ENCODE measurements at regions of chr4 and their contacts with region 1.

Region 1: GRCh38 chr4:52712172-52712990 is 38.8 kb downstream of the ERVMER34-1 start:
- DNase-seq: peak; percentile 97 to 99
- ATAC-seq: peak; percentile 92 to 95
- H3K4me3 ChIP-seq: peak overlapping the region; percentile 47 to 94 (median 72)
- H3K27ac ChIP-seq: peak overlapping the region; percentile 87 to 97 (median 96)
- H3K4me1 ChIP-seq: peaks cover 18 to 21% of the 10 kb centered on the region in 2 donors
- H3K27me3 ChIP-seq: no peaks in the 10 kb centered on the region
- CTCF ChIP-seq: no peak
- POLR2A ChIP-seq: peak; percentile 93 to 97

Region 2: DNA sequence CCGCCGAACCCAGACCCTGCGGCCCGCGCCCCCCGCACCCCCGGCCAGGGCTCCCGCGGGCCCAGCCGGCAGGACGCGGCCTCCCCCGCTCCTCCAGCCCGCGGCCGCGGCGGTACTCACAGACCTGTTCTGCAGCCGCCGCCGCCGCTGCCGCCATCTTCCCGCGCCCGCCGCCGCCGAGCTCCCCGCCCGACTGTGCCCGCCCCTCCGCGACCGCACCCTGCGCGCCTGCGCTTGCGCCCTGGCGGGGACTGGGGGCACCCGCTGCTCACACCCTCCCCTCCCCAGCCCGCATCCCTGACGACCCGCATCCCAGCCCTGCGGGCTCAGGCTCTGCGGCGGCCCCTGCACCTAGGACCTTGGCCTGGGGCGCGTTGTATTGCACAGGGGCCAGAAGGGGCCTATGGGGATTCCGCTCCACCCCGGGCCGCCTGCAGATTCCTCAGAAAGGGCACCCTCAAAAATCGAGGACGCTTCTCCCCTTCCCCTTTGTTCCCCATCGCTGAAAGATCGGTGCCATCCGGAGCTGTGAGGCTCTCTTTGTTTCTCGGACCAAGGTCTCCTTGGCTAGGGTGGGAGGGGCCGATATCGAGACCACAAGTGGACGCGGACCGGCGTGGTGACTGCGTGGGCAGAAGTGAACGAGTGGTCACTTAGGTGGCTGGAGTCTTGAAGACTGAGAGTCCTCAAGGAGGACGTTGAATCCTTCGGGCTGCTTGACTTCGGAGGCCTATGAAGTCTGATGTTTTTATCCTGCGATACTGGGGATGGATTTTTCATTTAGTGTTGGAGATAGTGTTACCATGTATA is 674.1 kb before region 1 on chr4 and contains the start of gene SGCB:
- in situ Hi-C with region 1: loop called in 1 of 4 experiments (anchors 25 kb)
- intact Hi-C with region 1: no loop called
- DNase-seq: peak; percentile 30 to 46
- ATAC-seq: peak; percentile 86 to 87
- H3K4me3 ChIP-seq: peak within 1 kb of the TSS; percentile 72 to 87 (median 78)
- H3K27ac ChIP-seq: peak within 1 kb of the TSS; percentile 85 to 90 (median 88)
- H3K4me1 ChIP-seq: peaks cover 27 to 39% of the 10 kb centered on the region in 2 donors
- H3K27me3 ChIP-seq: peaks cover 0 to 3% (median 0%) of the 10 kb centered on the region in 3 donors
- CTCF ChIP-seq: peak in 2 of 5 experiments; percentile 13 to 16
- POLR2A ChIP-seq: peak; percentile 63 to 73
- total RNA-seq, gene SGCB: 24.8 to 49.8 (median 39.8) TPM

Region 3: GRCh38 chr4:52477191-52477780 is 235.1 kb before region 1 on chr4:
- in situ Hi-C with region 1: no loop called
- intact Hi-C with region 1: no loop called
- DNase-seq: no peak
- ATAC-seq: no peak
- H3K4me3 ChIP-seq: no peak overlapping the region
- H3K27ac ChIP-seq: no peak overlapping the region
- H3K4me1 ChIP-seq: no peaks in the 10 kb centered on the region
- H3K27me3 ChIP-seq: no peaks in the 10 kb centered on the region
- CTCF ChIP-seq: no peak
- POLR2A ChIP-seq: no peak

Region 4: DNA sequence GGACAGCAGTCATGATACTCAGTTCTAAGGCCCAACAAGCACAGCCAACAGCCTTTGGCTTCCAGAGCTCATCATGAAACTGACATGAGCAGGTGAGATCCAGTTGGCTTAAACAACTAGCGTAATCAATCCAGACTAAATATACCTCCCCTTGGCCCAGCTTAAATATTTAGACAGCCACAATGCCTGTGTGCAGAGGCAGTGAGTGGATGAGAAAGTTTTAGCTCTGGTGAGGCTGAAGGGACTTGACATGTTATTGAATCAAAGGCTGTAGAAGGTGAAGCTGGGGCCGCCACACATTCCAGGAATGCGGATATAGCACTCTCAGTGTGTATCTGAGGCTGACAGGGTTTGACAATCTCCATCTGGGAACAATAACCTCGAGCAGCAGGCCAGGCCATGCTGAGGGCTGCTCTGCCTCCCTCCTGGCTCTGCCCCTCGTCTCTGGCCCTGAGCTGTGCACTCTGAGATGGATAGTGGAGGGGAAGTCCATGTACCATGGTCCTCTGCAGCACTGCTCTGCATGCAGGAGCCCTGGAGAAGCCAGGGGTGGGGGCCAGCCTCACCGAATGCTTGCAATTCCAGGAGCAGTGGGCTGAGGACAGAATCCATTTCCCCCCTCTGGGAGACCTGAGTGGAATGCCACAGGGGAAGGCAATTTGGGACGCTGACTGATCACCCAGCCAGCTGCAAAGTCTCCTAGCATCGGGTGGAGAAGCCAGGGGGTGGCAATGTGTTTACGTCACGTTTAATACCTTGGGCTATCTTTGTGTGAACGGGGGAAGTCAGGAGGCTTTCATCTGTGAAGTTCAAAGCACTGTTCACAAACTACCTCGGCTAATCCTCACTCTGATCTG is 112.5 kb after region 1 on chr4:
- in situ Hi-C with region 1: no loop called
- intact Hi-C with region 1: loop called (anchors 2 kb)
- DNase-seq: peak; percentile 51 to 58
- ATAC-seq: peak; percentile 95 to 97
- H3K4me3 ChIP-seq: no peak overlapping the region
- H3K27ac ChIP-seq: peak overlapping the region; percentile 62 to 73 (median 70)
- H3K4me1 ChIP-seq: peaks cover 19 to 25% of the 10 kb centered on the region in 2 donors
- H3K27me3 ChIP-seq: no peaks in the 10 kb centered on the region
- CTCF ChIP-seq: no peak
- POLR2A ChIP-seq: no peak

Region 5: DNA sequence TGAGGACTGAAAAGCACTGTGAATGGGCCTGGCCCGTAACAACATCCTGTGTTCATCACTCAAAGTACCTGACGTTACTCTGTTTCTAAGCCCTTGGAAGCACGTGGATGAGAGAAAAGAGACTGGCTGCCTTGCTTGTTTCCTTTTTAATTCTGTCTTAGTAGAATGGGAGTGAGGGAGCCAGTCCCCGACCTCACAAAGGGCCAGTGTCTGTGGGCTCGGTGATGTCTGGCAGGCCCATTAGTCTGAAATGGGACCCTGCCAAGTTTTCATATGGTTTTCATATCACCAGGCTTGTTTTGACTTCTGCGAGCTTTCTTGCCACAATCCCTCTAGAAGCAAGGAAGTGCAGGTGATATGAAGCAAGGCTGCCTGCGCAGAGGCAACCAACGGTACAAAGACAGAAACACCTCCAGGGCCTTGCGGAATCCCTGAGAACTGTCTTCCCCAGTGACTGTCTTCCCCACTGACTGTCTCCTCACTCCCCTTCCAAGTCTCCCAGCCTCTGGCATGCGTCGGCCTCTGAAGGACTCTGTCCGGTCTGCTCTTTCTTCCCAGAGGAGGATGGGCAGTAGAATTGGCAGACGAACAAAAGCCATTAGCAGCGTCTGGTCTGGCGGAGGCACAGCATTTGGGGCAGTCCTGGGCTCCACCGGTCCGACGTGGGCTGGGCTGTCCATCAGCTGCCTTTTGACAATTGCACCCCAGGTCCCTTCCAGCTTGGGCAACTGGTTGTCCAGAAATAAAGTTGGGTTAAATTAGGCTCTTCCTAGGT is 129.5 kb after region 1 on chr4:
- in situ Hi-C with region 1: no loop called
- intact Hi-C with region 1: no loop called
- DNase-seq: no peak
- ATAC-seq: peak in 1 of 2 donors; percentile 19
- H3K4me3 ChIP-seq: no peak overlapping the region
- H3K27ac ChIP-seq: peak overlapping the region in 3 of 4 donors; percentile 18 to 49 (median 44)
- H3K4me1 ChIP-seq: peaks cover 27 to 51% of the 10 kb centered on the region in 2 donors
- H3K27me3 ChIP-seq: no peaks in the 10 kb centered on the region
- CTCF ChIP-seq: no peak
- POLR2A ChIP-seq: no peak

Region 6: DNA sequence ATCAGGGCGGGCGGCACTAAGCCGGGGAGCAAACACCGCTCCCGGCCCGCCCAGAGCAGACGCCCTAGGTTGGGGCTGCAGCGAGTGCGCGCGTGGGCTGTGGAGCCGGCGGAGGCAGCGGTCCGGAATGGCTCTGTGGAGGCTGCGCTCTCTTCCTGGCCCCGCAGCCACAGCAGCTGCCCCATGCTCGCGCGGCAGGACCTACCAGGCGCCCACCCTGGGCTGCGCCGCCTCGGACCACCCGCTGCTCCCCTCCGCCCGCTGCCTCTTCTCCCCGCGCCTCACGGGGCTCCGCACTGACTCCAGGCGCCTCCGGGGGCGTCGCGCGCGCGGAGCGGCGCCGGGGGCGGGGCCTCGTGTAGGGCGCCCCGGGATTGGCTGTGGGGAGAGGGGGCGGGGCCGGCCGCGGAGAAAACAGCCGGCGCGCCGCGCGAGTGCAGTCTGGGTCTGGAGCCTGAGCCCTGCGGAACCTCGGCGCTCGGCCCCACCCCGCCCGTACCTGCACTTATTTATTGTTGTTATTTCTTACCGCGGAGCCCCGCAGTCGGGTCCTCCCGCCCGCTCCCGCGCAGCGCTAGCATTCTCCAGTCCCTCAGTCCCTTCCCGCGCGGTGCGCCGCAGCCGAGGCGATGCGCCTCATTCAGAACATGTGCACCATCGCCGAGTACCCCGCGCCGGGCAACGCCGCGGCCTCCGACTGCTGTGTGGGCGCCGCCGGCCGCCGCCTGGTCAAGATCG is 149.7 kb after region 1 on chr4 and contains the start of gene RASL11B:
- in situ Hi-C with region 1: no loop called
- intact Hi-C with region 1: loop called (anchors 5 kb)
- DNase-seq: peak; percentile 53 to 70
- ATAC-seq: peak; percentile 96 to 98
- H3K4me3 ChIP-seq: peak within 1 kb of the TSS; percentile 63 to 80 (median 72)
- H3K27ac ChIP-seq: peak within 1 kb of the TSS; percentile 59 to 72 (median 60)
- H3K4me1 ChIP-seq: peaks cover 4 to 10% of the 10 kb centered on the region in 2 donors
- H3K27me3 ChIP-seq: no peaks in the 10 kb centered on the region
- CTCF ChIP-seq: peak in 3 of 5 experiments; percentile 31 to 64 (median 42)
- POLR2A ChIP-seq: peak; percentile 35 to 74
- total RNA-seq, gene RASL11B: 0.18 TPM in 1 of 4 donors, not detected in the others

Region 7: GRCh38 chr4:53365486-53366300 is 653.3 kb after region 1 on chr4 and contains the start of gene SCFD2:
- in situ Hi-C with region 1: no loop called
- intact Hi-C with region 1: loop called (anchors 10 kb)
- DNase-seq: peak; percentile 96
- ATAC-seq: peak; percentile 100
- H3K4me3 ChIP-seq: peak within 1 kb of the TSS; percentile 64 to 98 (median 88)
- H3K27ac ChIP-seq: peak within 1 kb of the TSS; percentile 56 to 78 (median 68)
- H3K4me1 ChIP-seq: peaks cover 16 to 23% of the 10 kb centered on the region in 2 donors
- H3K27me3 ChIP-seq: peaks cover 2 to 13% (median 5%) of the 10 kb centered on the region in 3 donors
- CTCF ChIP-seq: no peak
- POLR2A ChIP-seq: peak; percentile 22 to 51
- total RNA-seq, gene SCFD2: 8.9 to 16.0 (median 14.8) TPM